ENCODE measurements at regions of chr11 and their contacts with region 1.

Region 1: GRCh38 chr11:406978-407739 is 7.6 kb downstream of the SIGIRR start:
- DNase-seq: peak; percentile 76
- ATAC-seq: peak; percentile 85
- H3K4me3 Mint-ChIP-seq: peak overlapping the region; percentile 60
- H3K27ac Mint-ChIP-seq: peak overlapping the region; percentile 35
- H3K4me1 Mint-ChIP-seq: peaks cover 3% of the 10 kb centered on the region
- H3K27me3 Mint-ChIP-seq: no peaks in the 10 kb centered on the region
- CTCF ChIP-seq: no peak

Region 2: DNA sequence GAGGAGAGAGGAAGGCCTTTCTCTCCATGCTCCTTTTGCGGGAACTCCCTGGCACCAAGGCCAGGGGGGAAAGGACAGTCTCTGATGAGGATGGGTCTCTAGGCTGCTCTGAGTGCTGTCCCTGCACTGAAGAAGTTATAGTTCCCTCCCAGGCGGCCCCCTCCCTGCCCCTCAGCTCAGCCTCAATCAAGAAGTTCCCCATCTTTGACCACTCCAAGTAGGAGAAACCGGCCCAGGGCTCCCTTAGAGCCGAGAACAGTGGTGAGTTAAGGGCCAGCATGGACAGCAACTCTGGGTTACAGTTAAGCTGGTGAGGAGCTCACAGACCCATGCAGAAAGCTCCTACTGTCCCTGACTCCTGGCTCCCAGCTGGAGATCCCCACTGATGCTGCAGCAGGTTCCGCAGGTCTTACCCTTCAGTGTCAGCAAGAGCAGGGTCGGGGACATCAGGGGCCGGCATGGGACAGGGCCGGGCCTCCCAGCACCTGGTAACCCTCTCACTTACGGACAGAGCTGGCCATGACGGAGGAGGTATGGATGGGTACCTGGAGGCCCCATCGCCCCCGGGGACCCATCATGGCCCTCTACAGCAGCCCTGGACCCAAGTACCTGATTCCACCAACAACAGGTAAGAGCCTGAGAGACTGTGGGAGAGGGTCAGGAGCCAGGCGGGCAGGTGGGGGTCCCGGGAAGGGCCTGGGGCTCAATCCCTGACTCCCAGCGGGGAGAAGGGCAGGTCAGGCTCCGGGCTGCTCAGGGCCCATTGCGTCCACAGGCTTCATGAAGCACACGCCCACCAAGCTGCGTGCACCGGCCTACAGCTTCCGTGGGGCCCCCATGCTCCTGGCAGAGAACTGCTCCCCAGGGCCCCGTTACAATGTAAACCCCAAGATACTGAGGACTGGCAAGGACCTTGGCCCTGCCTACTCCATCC is 210.1 kb before region 1 on chr11:
- CTCF ChIA-PET with region 1: no interaction called
- POLR2A ChIA-PET with region 1: no interaction called
- intact Hi-C with region 1: no loop called
- DNase-seq: peak; percentile 10
- ATAC-seq: no peak
- H3K4me3 Mint-ChIP-seq: no peak overlapping the region
- H3K27ac Mint-ChIP-seq: no peak overlapping the region
- H3K4me1 Mint-ChIP-seq: peaks cover 7% of the 10 kb centered on the region
- H3K27me3 Mint-ChIP-seq: no peaks in the 10 kb centered on the region
- CTCF ChIP-seq: no peak

Region 3: GRCh38 chr11:236774-237767 is 170.1 kb before region 1 on chr11 and contains the start of gene PSMD13:
- CTCF ChIA-PET with region 1: no interaction called
- POLR2A ChIA-PET with region 1: interaction called, 6 read pairs
- intact Hi-C with region 1: loop called (anchors 2 kb)
- DNase-seq: peak; percentile 85
- ATAC-seq: peak; percentile 78
- H3K4me3 Mint-ChIP-seq: peak within 1 kb of the TSS; percentile 98
- H3K27ac Mint-ChIP-seq: peak within 1 kb of the TSS; percentile 99
- H3K4me1 Mint-ChIP-seq: peaks cover 41% of the 10 kb centered on the region
- H3K27me3 Mint-ChIP-seq: no peaks in the 10 kb centered on the region
- CTCF ChIP-seq: no peak
- total RNA-seq, gene PSMD13: 147 and 149 TPM in 2 replicates

Region 4: GRCh38 chr11:568306-569157 is 161.4 kb after region 1 on chr11:
- CTCF ChIA-PET with region 1: no interaction called
- POLR2A ChIA-PET with region 1: no interaction called
- intact Hi-C with region 1: loop called (anchors 2 kb)
- DNase-seq: peak; percentile 96
- ATAC-seq: peak; percentile 93
- H3K4me3 Mint-ChIP-seq: peak overlapping the region; percentile 79
- H3K27ac Mint-ChIP-seq: peak overlapping the region; percentile 41
- H3K4me1 Mint-ChIP-seq: peaks cover 7% of the 10 kb centered on the region
- H3K27me3 Mint-ChIP-seq: no peaks in the 10 kb centered on the region
- CTCF ChIP-seq: no peak